Calu3 (cell line): ENCODE measurements at regions of chr5 and their contacts with region 1.

Region 1: GRCh38 chr5:130337179-130337888 is 433.1 kb downstream of the CHSY3 start:
- DNase-seq: no peak
- H3K4me3 Mint-ChIP-seq: peak overlapping the region; percentile 7
- H3K27ac Mint-ChIP-seq: peak overlapping the region; percentile 65
- H3K4me1 Mint-ChIP-seq: peaks cover 33% of the 10 kb centered on the region
- H3K27me3 Mint-ChIP-seq: no peaks in the 10 kb centered on the region
- CTCF ChIP-seq: no peak

Region 2: GRCh38 chr5:130541617-130542221 is 204.4 kb after region 1 on chr5:
- CTCF ChIA-PET with region 1: no interaction called
- intact Hi-C with region 1: loop called (anchors 5 kb)
- DNase-seq: peak; percentile 45
- H3K4me3 Mint-ChIP-seq: no peak overlapping the region
- H3K27ac Mint-ChIP-seq: peak overlapping the region; percentile 41
- H3K4me1 Mint-ChIP-seq: peaks cover 34% of the 10 kb centered on the region
- H3K27me3 Mint-ChIP-seq: no peaks in the 10 kb centered on the region
- CTCF ChIP-seq: no peak

Region 3: GRCh38 chr5:130642461-130642860 is 305.1 kb after region 1 on chr5:
- CTCF ChIA-PET with region 1: no interaction called
- intact Hi-C with region 1: no loop called
- DNase-seq: no peak
- H3K4me3 Mint-ChIP-seq: no peak overlapping the region
- H3K27ac Mint-ChIP-seq: no peak overlapping the region
- H3K4me1 Mint-ChIP-seq: no peaks in the 10 kb centered on the region
- H3K27me3 Mint-ChIP-seq: no peaks in the 10 kb centered on the region
- CTCF ChIP-seq: no peak

Region 4: DNA sequence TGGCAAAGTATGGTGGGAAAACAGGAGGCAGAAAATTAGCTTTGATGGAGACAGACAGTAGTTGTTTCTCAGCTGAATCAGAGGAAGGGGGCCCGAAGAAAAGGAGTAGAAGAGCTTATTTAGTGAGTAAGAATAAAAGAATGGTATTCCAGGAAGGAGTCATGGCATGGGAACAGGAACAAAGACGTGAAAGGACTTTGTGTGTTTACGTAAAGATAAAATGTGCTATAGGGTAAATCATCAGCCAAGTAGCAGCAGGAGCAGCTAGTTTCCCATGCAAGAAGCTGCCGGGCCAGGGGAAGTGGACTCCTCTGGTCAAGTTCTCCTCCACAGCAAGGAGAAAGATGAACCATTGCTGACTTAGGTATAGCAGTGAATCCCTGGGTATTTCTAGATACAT is 373.3 kb after region 1 on chr5:
- CTCF ChIA-PET with region 1: no interaction called
- intact Hi-C with region 1: loop called (anchors 10 kb)
- DNase-seq: peak; percentile 27
- H3K4me3 Mint-ChIP-seq: peak overlapping the region; percentile 7
- H3K27ac Mint-ChIP-seq: peak overlapping the region; percentile 7
- H3K4me1 Mint-ChIP-seq: peaks cover 30% of the 10 kb centered on the region
- H3K27me3 Mint-ChIP-seq: no peaks in the 10 kb centered on the region
- CTCF ChIP-seq: no peak